ENCODE measurements at regions of chr5 and their contacts with region 1.

Region 1: GRCh38 chr5:108201721-108202120 is 180.2 kb downstream of the FBXL17 start:
- DNase-seq: no peak
- H3K4me3 ChIP-seq: no peak overlapping the region
- H3K27ac ChIP-seq: no peak overlapping the region
- H3K4me1 ChIP-seq: no peaks in the 10 kb centered on the region
- H3K27me3 ChIP-seq: no peaks in the 10 kb centered on the region
- CTCF ChIP-seq: no peak
- POLR2A ChIP-seq: no peak

Region 2: GRCh38 chr5:106312358-106312757 is 1889.4 kb before region 1 on chr5:
- intact Hi-C with region 1: loop called (anchors 5 kb)
- DNase-seq: no peak
- H3K4me3 ChIP-seq: no peak overlapping the region
- H3K27ac ChIP-seq: no peak overlapping the region
- H3K4me1 ChIP-seq: no peaks in the 10 kb centered on the region
- H3K27me3 ChIP-seq: no peaks in the 10 kb centered on the region
- CTCF ChIP-seq: no peak
- POLR2A ChIP-seq: no peak